ENCODE measurements at regions of chr12 and their contacts with region 1.

Region 1: GRCh38 chr12:5488626-5488955 is 56.7 kb downstream of the NTF3 start:
- DNase-seq: no peak
- ATAC-seq: no peak
- H3K4me3 ChIP-seq: no peak overlapping the region
- H3K27ac ChIP-seq: peak overlapping the region; percentile 73 to 99
- H3K4me1 ChIP-seq: peaks cover 4 to 12% of the 10 kb centered on the region in 2 donors
- H3K27me3 ChIP-seq: no peaks in the 10 kb centered on the region

Region 2: DNA sequence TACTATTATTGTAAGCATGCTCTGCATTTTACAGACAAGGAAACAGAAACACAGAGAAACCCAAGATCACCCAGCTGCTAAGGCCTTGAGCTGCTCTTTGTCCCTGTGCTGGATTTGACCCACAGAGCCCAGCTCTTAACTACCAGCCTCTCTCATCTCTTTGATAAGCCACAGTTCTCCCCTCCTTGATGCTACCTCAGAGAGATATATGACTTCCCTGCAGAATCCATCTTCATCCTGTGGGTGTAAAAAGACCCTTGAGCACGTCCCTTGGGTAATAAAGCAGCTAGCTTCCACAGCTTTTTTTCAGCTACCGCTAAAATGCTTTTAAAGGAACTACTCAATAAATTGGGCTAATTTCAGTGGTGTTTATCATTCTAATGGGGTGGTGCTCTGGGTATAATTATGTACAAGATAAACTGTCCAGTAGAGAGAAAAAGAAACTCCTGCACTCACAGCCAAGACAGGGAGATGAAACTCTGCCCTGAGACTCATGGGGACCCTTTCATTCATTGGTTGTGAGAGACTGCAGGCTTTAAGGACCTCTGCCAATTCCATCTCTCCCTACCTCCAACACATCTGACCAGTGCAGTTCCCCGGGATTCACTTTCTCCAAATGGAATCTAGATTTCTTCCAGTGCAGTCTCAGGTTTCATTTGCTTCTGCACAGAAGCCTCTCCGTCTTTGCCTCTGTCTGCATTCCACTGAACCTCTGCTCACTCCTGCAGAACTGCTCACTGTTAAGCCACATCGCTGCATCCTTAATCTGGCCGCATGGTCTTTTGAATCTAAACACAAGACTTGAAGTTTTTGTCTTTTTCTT is 81.3 kb before region 1 on chr12:
- intact Hi-C with region 1: no loop called
- DNase-seq: no peak
- ATAC-seq: no peak
- H3K4me3 ChIP-seq: no peak overlapping the region
- H3K27ac ChIP-seq: no peak overlapping the region
- H3K4me1 ChIP-seq: peaks cover 0 to 8% of the 10 kb centered on the region in 2 donors
- H3K27me3 ChIP-seq: no peaks in the 10 kb centered on the region

Region 3: GRCh38 chr12:5434647-5435560 is 53.7 kb before region 1 on chr12:
- intact Hi-C with region 1: loop called (anchors 2 to 5 kb)
- DNase-seq: no peak
- ATAC-seq: no peak
- H3K4me3 ChIP-seq: peak overlapping the region in 1 of 2 donors; percentile 91
- H3K27ac ChIP-seq: peak overlapping the region; percentile 20 to 88
- H3K4me1 ChIP-seq: peaks cover 4 to 7% of the 10 kb centered on the region in 2 donors
- H3K27me3 ChIP-seq: no peaks in the 10 kb centered on the region